Endothelial cell of umbilical vein (primary cell): ENCODE measurements at regions of chr6 and their contacts with region 1.

Region 1: DNA sequence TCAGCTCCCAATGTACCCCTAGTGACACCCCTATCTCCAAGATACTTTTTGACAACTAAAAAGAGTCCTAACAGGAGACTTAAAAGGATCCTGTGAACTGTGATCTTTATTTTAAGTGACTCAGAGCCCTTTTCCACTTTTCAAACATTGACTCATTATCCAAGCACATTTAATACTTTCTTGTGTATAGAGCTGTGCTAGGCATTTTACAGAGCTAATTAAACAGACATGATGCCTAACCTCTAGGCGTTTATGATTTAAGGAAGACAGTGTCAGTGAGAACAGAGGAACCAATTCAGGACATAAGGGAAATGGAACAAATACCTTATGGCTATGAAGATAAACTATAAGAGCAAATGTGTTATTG is 282.6 kb downstream of the TPBG start:
- DNase-seq: no peak
- H3K4me3 ChIP-seq: no peak overlapping the region
- H3K27ac ChIP-seq: no peak overlapping the region
- H3K4me1 ChIP-seq: no peaks in the 10 kb centered on the region
- H3K27me3 ChIP-seq: no peaks in the 10 kb centered on the region
- CTCF ChIP-seq: no peak
- POLR2A ChIP-seq: no peak

Region 2: GRCh38 chr6:82612475-82613039 is 33.6 kb before region 1 on chr6:
- CTCF ChIA-PET with region 1: no interaction called
- POLR2A ChIA-PET with region 1: no interaction called
- dilution Hi-C with region 1: no loop called
- intact Hi-C with region 1: loop called (anchors 1 kb)
- DNase-seq: no peak
- H3K4me3 ChIP-seq: no peak overlapping the region
- H3K27ac ChIP-seq: no peak overlapping the region
- H3K4me1 ChIP-seq: no peaks in the 10 kb centered on the region
- H3K27me3 ChIP-seq: no peaks in the 10 kb centered on the region
- CTCF ChIP-seq: no peak
- POLR2A ChIP-seq: no peak

Region 3: GRCh38 chr6:82624212-82624611 is 22.0 kb before region 1 on chr6:
- CTCF ChIA-PET with region 1: no interaction called
- POLR2A ChIA-PET with region 1: no interaction called
- dilution Hi-C with region 1: no loop called
- intact Hi-C with region 1: no loop called
- DNase-seq: no peak
- H3K4me3 ChIP-seq: no peak overlapping the region
- H3K27ac ChIP-seq: no peak overlapping the region
- H3K4me1 ChIP-seq: no peaks in the 10 kb centered on the region
- H3K27me3 ChIP-seq: no peaks in the 10 kb centered on the region
- CTCF ChIP-seq: no peak
- POLR2A ChIP-seq: no peak